ENCODE measurements at regions of chr20 and their contacts with region 1.

Region 1: GRCh38 chr20:29873946-29874345 is 1383.5 kb upstream of the DEFB115 start:
- DNase-seq: no peak
- H3K4me3 ChIP-seq: no peak overlapping the region
- H3K27ac ChIP-seq: no peak overlapping the region
- H3K4me1 ChIP-seq: no peaks in the 10 kb centered on the region
- H3K27me3 ChIP-seq: peaks cover 0 to 8% (median 0%) of the 10 kb centered on the region in 4 donors
- CTCF ChIP-seq: no peak
- POLR2A ChIP-seq: no peak

Region 2: GRCh38 chr20:29119141-29119540 is 754.8 kb before region 1 on chr20:
- intact Hi-C with region 1: loop called (anchors 10 kb)
- DNase-seq: no peak
- H3K4me3 ChIP-seq: no peak overlapping the region
- H3K27ac ChIP-seq: no peak overlapping the region
- H3K4me1 ChIP-seq: no peaks in the 10 kb centered on the region
- H3K27me3 ChIP-seq: no peaks in the 10 kb centered on the region
- CTCF ChIP-seq: no peak
- POLR2A ChIP-seq: no peak

Measured in esophagus squamous epithelium (tissue), 5 donors.